ENCODE measurements at regions of chr1 and their contacts with region 1.

Region 1: GRCh38 chr1:230642263-230642959 is at the start of gene COG2:
- DNase-seq: peak; percentile 93
- H3K4me3 Mint-ChIP-seq: peak within 1 kb of the TSS; percentile 96
- H3K27ac Mint-ChIP-seq: peak within 1 kb of the TSS; percentile 95
- H3K4me1 Mint-ChIP-seq: peaks cover 35% of the 10 kb centered on the region
- H3K27me3 Mint-ChIP-seq: peaks cover 12% of the 10 kb centered on the region
- total RNA-seq, gene COG2: 46.3 and 46.4 TPM in 2 replicates

Region 2: GRCh38 chr1:230066466-230067404 is 575.7 kb before region 1 on chr1 and contains the start of gene GALNT2:
- intact Hi-C with region 1: loop called (anchors 2 kb)
- DNase-seq: peak; percentile 88
- H3K4me3 Mint-ChIP-seq: peak within 1 kb of the TSS; percentile 93
- H3K27ac Mint-ChIP-seq: peak within 1 kb of the TSS; percentile 89
- H3K4me1 Mint-ChIP-seq: peaks cover 48% of the 10 kb centered on the region
- H3K27me3 Mint-ChIP-seq: peaks cover 3% of the 10 kb centered on the region
- total RNA-seq, gene GALNT2: 67.6 and 67.9 TPM in 2 replicates

Region 3: DNA sequence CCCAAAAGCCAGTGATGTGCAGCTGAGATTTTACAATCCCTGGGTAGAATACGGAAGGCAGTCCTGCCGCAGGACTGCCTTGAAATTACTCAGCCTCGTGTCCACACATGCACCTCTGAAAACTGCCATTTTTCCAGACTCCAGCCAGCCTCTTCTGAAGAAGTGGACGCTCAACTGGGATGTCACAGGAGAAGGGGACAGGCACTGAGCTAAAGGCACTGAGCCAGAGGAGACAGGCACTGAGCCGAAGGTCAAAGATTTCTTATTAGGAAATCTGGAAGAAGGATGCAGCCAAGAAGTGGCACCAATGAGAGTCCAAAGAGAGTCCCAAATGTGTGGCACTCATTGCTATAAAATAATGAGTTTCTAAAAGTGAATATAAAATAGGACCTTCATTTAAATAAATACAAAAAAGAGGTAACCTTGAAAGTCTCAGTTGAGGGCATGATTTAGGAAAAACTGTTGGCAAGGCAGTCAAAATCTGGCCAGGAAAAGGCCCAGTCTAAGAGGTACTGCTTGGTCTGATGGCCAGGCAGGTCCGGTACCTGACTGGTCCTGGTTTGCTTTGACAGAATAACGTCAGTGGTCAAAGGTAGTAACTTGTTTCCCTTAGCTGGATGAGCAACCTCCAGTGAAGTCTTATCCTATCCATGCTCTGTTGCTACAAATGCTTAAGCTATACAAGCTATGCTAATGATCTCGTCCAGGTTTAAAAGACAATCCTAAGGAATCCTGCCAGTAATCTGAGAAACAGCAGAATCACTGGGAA is 301.4 kb before region 1 on chr1:
- intact Hi-C with region 1: no loop called
- DNase-seq: no peak
- H3K4me3 Mint-ChIP-seq: no peak overlapping the region
- H3K27ac Mint-ChIP-seq: no peak overlapping the region
- H3K4me1 Mint-ChIP-seq: no peaks in the 10 kb centered on the region
- H3K27me3 Mint-ChIP-seq: peaks cover 13% of the 10 kb centered on the region

Region 4: DNA sequence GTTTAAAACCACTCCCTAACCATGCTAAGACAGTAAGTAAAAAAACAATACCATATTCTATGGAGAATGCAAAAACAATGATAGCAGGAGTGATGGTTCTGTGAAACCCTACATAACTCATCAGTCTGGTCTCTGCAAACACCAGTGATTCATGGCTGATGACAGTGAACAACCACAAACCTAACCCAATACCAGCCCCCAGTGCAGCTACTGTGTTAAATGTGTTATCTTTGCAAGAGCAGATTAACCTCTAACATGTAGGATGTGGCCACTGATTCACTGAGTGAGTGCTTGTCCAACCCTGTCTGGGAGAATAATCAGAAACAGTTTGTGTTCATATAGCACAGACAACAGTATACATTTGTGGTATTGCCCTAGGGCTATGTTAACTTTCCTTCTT is 100.4 kb before region 1 on chr1:
- intact Hi-C with region 1: loop called (anchors 5 kb)
- DNase-seq: peak; percentile 25
- H3K4me3 Mint-ChIP-seq: no peak overlapping the region
- H3K27ac Mint-ChIP-seq: peak overlapping the region; percentile 53
- H3K4me1 Mint-ChIP-seq: peaks cover 15% of the 10 kb centered on the region
- H3K27me3 Mint-ChIP-seq: peaks cover 4% of the 10 kb centered on the region

Region 5: DNA sequence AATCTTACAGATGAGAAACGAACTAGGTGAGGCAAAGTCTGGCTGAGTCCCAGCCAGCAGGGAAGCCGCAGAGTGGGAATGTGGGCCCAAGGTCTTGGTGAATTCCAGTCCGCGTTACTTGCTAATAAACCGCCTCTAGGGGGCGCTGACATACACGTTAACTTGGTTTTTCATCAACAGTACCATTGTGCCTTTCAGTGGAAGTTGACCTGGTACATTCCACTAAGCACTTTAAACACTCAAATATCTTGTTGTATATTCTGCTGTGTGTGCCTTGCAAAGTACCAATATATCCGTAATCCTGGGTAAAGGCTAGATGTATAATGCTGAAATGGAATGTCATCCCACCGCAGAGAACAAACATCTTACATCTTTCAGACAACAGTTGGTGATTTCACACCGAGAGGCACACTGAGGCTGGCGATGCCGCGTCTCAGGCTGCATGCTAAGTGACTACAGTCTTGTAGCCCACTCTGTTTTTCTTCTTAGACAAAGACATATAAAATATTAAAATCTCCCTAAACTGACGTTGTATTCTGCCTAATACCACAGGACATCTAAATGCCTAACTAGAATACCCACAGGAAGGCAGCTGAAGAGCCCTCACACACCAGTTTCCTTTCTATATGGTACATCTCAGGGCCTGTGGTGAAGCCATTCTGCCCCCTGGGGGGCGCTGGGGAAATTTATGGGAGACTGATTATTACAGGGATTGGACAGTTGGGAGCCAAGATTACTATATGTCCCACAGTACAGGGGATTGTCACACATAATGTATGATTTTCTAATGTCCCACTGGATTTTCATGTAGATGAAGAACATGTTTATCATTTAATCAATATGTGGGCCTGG is 275.1 kb after region 1 on chr1:
- intact Hi-C with region 1: loop called (anchors 5 kb)
- DNase-seq: peak; percentile 44
- H3K4me3 Mint-ChIP-seq: no peak overlapping the region
- H3K27ac Mint-ChIP-seq: no peak overlapping the region
- H3K4me1 Mint-ChIP-seq: no peaks in the 10 kb centered on the region
- H3K27me3 Mint-ChIP-seq: no peaks in the 10 kb centered on the region

Region 6: GRCh38 chr1:231040019-231040799 is 397.8 kb after region 1 on chr1 and contains the start of gene FAM89A:
- intact Hi-C with region 1: loop called (anchors 5 kb)
- DNase-seq: peak; percentile 57
- H3K4me3 Mint-ChIP-seq: peak within 1 kb of the TSS; percentile 84
- H3K27ac Mint-ChIP-seq: peak within 1 kb of the TSS; percentile 77
- H3K4me1 Mint-ChIP-seq: peaks cover 35% of the 10 kb centered on the region
- H3K27me3 Mint-ChIP-seq: peaks cover 40% of the 10 kb centered on the region
- total RNA-seq, gene FAM89A: 23.2 and 28.0 TPM in 2 replicates

Region 7: DNA sequence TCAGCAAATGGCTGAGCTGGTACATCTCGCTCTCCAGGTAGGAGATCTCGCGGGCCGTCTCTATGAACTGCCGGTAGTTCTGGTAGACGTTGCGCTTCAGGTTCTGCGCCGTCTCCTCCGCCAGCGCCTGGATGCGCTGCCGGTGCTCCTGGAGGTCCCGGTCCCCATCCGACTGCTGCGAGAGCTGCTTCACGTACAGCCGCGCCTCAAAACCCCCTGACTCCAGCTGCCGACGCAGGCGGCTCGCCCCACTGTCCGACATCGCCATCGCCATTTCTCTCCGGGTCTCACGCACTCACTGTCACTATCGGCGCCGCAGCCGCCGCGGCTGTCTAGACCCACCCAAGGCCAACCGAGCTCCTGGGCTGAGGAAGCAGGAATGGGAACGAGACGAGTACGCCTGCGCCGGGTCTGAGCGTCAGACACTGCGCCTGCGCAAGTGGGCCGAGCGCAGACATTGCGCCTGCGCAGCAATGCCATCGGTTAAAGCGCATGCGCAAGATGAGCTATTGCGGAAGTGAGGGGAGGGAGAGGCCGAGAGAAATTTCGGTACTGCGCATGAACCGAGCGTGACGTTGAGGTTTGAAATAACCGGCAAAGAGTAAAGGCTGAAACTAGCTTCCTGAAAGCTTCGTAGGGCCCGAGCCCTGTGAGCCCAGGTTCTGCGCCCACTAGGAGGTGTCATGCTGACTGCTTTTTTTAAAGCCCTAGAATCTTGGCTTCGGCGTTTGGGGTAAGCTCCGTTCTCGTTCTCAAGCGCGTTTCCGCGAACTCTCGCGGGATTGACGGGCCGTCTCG is 695.3 kb after region 1 on chr1 and contains the start of gene EXOC8:
- intact Hi-C with region 1: loop called (anchors 5 kb)
- DNase-seq: peak; percentile 99
- H3K4me3 Mint-ChIP-seq: peak within 1 kb of the TSS; percentile 98
- H3K27ac Mint-ChIP-seq: peak within 1 kb of the TSS; percentile 100
- H3K4me1 Mint-ChIP-seq: peaks cover 62% of the 10 kb centered on the region
- H3K27me3 Mint-ChIP-seq: peaks cover 3% of the 10 kb centered on the region
- total RNA-seq, gene EXOC8: 14.4 and 15.6 TPM in 2 replicates

Region 8: DNA sequence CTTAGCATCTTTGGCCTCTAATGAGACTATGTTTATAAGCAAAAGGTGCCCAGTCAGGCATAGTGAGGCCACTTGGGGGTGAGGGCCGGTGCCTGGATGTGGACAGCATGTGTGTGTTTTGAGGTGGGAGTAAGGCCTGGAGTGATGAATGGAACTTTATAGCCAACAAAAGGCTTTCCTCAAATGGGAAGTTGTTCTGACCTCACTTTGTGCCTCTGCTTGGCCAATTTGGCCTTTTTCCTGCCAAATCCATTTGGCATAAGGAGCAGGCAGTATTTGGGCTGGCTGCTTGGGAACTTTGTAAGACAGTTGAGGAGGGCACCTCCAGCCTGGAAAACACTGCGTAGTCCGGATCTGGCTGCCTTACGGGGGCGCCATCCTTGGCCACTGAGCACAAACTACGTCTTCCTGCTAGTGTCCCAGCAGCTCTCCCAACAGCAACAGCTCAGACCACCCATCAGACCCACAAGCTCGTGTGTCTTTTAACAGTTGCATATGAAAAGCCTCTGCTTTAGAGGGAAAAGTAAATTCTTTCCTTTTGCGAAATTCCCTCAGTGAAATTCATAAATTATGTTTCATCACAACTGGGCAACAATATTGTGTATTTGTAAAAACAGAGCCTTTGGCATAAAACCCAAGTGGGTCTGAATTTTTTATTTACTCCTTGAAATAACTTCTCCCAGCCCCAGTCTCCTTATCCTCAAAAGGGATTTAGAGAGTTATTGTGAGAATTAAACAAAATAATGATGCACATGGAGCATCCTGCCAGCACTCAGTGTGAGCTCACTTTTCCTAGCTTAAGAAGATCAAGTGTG is 1307.1 kb after region 1 on chr1:
- intact Hi-C with region 1: no loop called
- DNase-seq: no peak
- H3K4me3 Mint-ChIP-seq: no peak overlapping the region
- H3K27ac Mint-ChIP-seq: no peak overlapping the region
- H3K4me1 Mint-ChIP-seq: no peaks in the 10 kb centered on the region
- H3K27me3 Mint-ChIP-seq: no peaks in the 10 kb centered on the region

Measured in activated T-helper 1 cell treated with anti-CD3 and anti-CD28 coated beads, Interleukin-12 subunit alpha, Interleukin-12 subunit beta, Interleukin-2, Interleukin-4 antibody, amounts not matched to agents 30 ng/mL and 10 ng/mL and 1 ng/mL, durations not matched to agents 14 hours and 24 hours and 36 hours (primary cell).